Activated naive CD4-positive, alpha-beta T cell treated with anti-CD3 and anti-CD28 coated beads, Interleukin-2, amount 10 ng/mL, durations not matched to agents 7 days and 5 days (primary cell): ENCODE measurements at regions of chr11 and their contacts with region 1.

Region 1: DNA sequence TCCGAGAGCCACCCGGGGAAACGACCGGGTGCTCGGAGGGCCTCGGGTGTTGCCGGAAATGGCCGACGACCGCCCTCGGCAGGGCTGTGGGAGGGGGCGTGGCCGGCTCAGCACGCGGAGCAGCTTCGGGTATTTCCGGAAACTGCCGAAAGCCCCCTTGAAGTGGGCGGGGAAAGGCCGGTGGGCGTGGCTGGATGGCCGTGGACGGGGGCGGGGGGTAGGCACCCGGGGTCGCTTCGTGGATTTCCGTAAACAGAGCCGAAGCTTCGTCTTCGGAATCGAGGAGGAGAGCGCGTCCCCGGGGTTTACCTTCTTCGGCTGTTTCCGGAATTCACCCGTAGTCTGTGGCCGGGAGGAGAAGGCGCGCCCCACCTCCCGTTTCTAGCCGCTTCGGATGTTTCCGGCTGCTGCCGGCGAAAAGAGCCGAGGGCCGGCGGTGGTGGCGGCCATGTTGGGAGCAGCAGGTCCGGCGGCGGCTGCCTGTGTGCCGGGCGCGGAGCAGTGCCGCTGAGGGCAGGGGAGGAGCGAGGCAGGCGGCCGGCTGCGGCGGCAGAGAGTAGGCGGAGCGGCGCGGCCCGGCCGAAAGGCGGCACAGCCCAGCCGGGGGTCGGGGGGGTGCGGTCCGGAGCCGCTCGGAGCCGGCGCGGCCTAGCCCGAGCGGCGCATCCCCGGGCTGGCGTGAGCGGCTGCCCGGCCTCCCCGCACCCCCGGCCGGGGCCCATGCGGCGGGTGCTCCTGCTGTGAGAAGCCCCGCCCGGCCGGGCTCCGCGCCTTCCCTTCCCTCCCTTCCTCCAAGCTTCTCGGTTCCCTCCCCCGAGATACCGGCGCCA is at the start of gene MARK2:
- DNase-seq: peak; percentile 99
- H3K4me3 Mint-ChIP-seq: peak within 1 kb of the TSS; percentile 89
- H3K27ac Mint-ChIP-seq: peak within 1 kb of the TSS; percentile 90
- H3K4me1 Mint-ChIP-seq: peaks cover 48% of the 10 kb centered on the region
- H3K27me3 Mint-ChIP-seq: no peaks in the 10 kb centered on the region

Region 2: GRCh38 chr11:63687845-63688244 is 151.0 kb before region 1 on chr11:
- CTCF ChIA-PET with region 1: no interaction called
- DNase-seq: no peak
- H3K4me3 Mint-ChIP-seq: no peak overlapping the region
- H3K27ac Mint-ChIP-seq: no peak overlapping the region
- H3K4me1 Mint-ChIP-seq: peaks cover 22% of the 10 kb centered on the region
- H3K27me3 Mint-ChIP-seq: no peaks in the 10 kb centered on the region

Region 3: GRCh38 chr11:63882555-63883242 is 43.8 kb after region 1 on chr11:
- CTCF ChIA-PET with region 1: interaction called, 51 read pairs
- DNase-seq: no peak
- H3K4me3 Mint-ChIP-seq: no peak overlapping the region
- H3K27ac Mint-ChIP-seq: no peak overlapping the region
- H3K4me1 Mint-ChIP-seq: peaks cover 70% of the 10 kb centered on the region
- H3K27me3 Mint-ChIP-seq: no peaks in the 10 kb centered on the region

Region 4: GRCh38 chr11:63906585-63906984 is 67.7 kb after region 1 on chr11:
- CTCF ChIA-PET with region 1: interaction called, 47 read pairs
- DNase-seq: peak; percentile 75
- H3K4me3 Mint-ChIP-seq: no peak overlapping the region
- H3K27ac Mint-ChIP-seq: no peak overlapping the region
- H3K4me1 Mint-ChIP-seq: peaks cover 6% of the 10 kb centered on the region
- H3K27me3 Mint-ChIP-seq: no peaks in the 10 kb centered on the region

Region 5: GRCh38 chr11:63945477-63946163 is 106.7 kb after region 1 on chr11:
- CTCF ChIA-PET with region 1: interaction called, 150 read pairs
- DNase-seq: peak; percentile 68
- H3K4me3 Mint-ChIP-seq: no peak overlapping the region
- H3K27ac Mint-ChIP-seq: no peak overlapping the region
- H3K4me1 Mint-ChIP-seq: peaks cover 26% of the 10 kb centered on the region
- H3K27me3 Mint-ChIP-seq: no peaks in the 10 kb centered on the region

Region 6: DNA sequence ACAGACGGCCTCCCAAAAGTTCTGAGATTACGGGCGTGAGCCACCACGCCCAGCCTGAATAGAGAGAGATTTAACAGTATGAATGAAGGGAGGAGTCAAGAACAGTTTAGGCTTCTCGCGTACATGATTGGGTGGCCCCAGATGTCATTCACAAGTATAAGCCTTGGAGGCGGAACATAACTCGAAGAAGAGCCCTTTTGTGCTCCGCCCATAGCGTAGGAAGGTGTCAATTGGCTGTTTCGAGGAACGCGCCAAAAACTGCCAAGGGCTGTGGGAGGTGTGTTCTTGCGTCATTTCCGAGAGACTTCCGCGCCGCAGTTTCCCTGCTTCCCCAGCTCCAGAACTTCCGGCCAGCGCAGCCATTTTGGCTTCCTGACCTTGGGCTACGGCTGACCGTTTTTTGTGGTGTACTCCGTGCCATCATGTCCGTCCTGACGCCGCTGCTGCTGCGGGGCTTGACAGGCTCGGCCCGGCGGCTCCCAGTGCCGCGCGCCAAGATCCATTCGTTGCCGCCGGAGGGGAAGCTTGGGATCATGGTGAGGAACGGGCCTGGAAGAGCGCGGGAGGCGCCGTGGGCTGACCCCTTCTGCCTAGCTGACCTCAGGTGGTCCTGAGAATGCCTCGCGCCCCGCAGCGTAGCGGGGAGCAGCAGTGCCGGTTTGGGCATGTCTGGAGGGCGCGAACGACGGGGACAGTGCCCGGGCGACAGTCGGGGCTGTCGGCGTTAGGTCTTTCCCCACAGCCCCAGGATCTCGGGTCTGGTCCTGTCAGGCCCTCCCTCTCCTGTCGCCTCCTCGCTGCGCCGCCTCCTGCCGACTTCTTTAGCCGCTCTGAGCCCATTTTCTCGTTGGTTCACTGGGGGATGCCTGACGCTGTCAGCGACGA is 135.6 kb after region 1 on chr11 and contains the start of gene COX8A:
- CTCF ChIA-PET with region 1: interaction called, 13 read pairs
- DNase-seq: peak; percentile 98
- H3K4me3 Mint-ChIP-seq: peak within 1 kb of the TSS; percentile 100
- H3K27ac Mint-ChIP-seq: peak within 1 kb of the TSS; percentile 98
- H3K4me1 Mint-ChIP-seq: peaks cover 35% of the 10 kb centered on the region
- H3K27me3 Mint-ChIP-seq: peaks cover 15% of the 10 kb centered on the region